Posterior cingulate gyrus (tissue), 11 donors: ENCODE measurements at regions of chr5 and their contacts with region 1.

Region 1: GRCh38 chr5:150523472-150524350 is 15.8 kb downstream of the NDST1 start:
- DNase-seq: peak in 6 of 10 donors; percentile 41 to 93 (median 62)

Region 2: GRCh38 chr5:150458819-150459557 is 64.7 kb before region 1 on chr5:
- intact Hi-C with region 1: loop called (anchors 2 kb)
- DNase-seq: peak; percentile 58 to 97 (median 82)

Region 3: GRCh38 chr5:150486402-150487198 is 37.1 kb before region 1 on chr5:
- intact Hi-C with region 1: loop called (anchors 2 kb)
- DNase-seq: peak in 4 of 10 donors; percentile 31 to 91 (median 51)